ENCODE measurements at regions of chr14 and their contacts with region 1.

Region 1: DNA sequence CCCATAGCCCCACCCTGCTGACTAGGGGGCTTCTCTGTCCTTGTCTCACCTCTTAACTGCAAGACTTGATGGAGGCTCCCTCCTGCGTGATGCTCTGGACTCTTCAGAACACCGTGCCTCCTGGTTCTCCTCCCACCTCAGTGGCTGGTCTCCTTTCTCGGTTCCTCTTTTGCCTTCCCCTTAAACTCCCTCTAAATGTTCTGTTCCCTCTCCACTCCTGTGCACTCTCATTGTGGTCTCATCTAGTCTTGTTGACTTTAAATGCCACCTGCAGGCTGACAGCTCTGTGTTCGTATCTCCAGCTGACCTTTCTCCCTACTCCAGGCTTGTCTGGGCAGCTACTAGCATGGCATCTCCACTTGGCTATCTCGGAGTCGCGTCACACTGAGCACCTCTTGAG is 28.3 kb downstream of the DYNC1H1 start:
- DNase-seq: no peak
- H3K4me3 ChIP-seq: no peak overlapping the region
- H3K27ac ChIP-seq: no peak overlapping the region
- H3K4me1 ChIP-seq: no peaks in the 10 kb centered on the region
- H3K27me3 ChIP-seq: no peaks in the 10 kb centered on the region
- CTCF ChIP-seq: no peak

Region 2: DNA sequence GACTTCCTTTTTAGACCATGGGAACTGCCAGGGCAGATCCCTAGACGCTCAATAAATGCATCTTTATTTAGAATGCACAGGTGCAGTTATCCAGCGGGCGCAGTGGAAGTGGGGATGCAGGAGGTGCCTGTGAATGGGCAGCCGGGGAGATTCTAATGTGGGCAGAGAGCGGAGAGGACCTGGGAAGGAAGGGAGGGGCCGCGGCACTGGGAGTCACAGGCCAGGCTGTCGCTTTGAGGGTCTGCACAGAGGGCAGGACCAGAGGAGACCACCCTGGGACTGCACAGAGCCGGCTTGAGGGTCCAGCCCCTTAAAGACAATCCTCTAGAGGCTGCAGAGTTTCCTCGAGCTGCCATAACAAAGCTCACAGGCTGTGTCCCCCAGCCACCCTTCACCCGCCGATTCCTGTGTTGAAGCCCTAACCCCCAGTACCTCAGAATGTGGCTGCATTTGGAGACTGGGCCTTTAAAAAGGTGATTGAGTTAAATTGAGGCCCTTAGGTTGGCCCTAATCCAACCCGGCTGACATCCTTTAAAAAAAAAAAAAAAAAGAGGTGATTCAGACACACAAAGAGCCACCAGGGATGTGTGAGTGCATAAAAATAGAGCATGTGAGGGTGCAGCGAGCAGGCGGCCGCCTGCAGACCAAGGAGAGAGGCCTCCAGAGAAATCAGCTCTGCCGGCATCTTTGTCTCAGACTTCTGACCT is 275.6 kb before region 1 on chr14:
- CTCF ChIA-PET with region 1: no interaction called
- POLR2A ChIA-PET with region 1: no interaction called
- intact Hi-C with region 1: no loop called
- DNase-seq: no peak
- H3K4me3 ChIP-seq: no peak overlapping the region
- H3K27ac ChIP-seq: no peak overlapping the region
- H3K4me1 ChIP-seq: no peaks in the 10 kb centered on the region
- H3K27me3 ChIP-seq: no peaks in the 10 kb centered on the region
- CTCF ChIP-seq: no peak

Region 3: DNA sequence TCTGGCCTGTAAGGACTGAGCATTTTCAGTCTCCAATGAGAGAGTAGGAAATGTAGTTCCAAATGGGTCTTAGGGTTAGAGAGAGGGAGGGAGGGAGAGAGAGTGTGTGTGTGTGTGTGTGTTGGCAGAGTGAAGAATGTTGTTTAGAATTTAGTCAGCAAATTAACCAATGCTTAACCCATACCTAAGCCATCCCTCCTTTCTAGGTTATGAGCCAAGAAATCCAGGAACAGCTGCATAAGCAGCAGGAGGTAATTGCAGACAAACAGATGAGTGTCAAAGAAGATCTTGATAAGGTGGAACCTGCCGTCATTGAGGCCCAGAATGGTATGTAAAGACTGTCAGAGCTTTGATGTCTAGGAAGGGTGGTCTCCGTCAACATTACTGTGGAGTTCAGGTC is 37.2 kb after region 1 on chr14:
- CTCF ChIA-PET with region 1: no interaction called
- POLR2A ChIA-PET with region 1: no interaction called
- intact Hi-C with region 1: loop called (anchors 5 kb)
- DNase-seq: no peak
- H3K4me3 ChIP-seq: no peak overlapping the region
- H3K27ac ChIP-seq: no peak overlapping the region
- H3K4me1 ChIP-seq: no peaks in the 10 kb centered on the region
- H3K27me3 ChIP-seq: no peaks in the 10 kb centered on the region
- CTCF ChIP-seq: no peak

Measured in A673 (cell line).